ENCODE measurements at regions of chr2 and their contacts with region 1.

Region 1: DNA sequence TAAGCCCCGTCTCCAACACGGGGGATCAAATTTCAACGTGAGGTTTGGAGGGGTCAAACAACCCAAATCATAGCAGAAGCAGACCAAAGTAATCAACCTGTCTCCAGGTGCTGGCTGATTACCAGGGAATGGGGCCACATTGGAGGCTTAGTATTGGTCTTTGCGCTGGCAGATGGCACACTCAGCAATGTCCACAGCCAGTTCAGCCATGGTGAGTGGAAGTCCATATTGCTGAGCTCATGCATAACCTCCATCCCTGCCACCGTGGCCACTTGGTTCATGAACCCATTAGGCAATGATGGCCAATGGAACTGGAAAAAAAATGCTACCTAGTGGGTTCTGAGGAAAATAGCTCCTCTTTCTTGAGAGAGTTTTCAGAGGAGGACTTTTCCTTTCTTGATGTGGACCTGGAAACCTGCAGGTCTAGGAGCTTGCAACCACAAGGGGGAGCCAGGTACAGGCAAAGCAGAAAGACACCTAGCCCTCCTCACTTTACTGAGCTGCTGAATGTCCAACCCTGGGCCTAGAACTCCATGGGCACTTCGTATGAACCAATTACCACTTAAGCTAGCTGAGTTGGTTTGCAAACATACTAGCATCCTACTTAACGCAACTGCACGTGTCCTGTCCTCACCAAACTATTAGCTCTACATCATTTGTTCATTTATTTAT is 128.0 kb upstream of the GYPC start:
- DNase-seq: peak; percentile 68
- ATAC-seq: peak; percentile 91
- H3K4me3 Mint-ChIP-seq: no peak overlapping the region
- H3K27ac Mint-ChIP-seq: no peak overlapping the region
- H3K4me1 Mint-ChIP-seq: no peaks in the 10 kb centered on the region
- H3K27me3 Mint-ChIP-seq: peaks cover 7% of the 10 kb centered on the region
- CTCF ChIP-seq: peak; percentile 26; the same call in 1 of the 2 replicates

Region 2: GRCh38 chr2:126769118-126769517 is 241.1 kb after region 1 on chr2:
- CTCF ChIA-PET with region 1: interaction called, 53 read pairs
- POLR2A ChIA-PET with region 1: no interaction called
- DNase-seq: no peak
- ATAC-seq: peak; percentile 54
- H3K4me3 Mint-ChIP-seq: no peak overlapping the region
- H3K27ac Mint-ChIP-seq: no peak overlapping the region
- H3K4me1 Mint-ChIP-seq: peaks cover 3% of the 10 kb centered on the region; the same call in 1 of the 2 replicates
- H3K27me3 Mint-ChIP-seq: peaks cover 11% of the 10 kb centered on the region
- CTCF ChIP-seq: no peak

Region 3: DNA sequence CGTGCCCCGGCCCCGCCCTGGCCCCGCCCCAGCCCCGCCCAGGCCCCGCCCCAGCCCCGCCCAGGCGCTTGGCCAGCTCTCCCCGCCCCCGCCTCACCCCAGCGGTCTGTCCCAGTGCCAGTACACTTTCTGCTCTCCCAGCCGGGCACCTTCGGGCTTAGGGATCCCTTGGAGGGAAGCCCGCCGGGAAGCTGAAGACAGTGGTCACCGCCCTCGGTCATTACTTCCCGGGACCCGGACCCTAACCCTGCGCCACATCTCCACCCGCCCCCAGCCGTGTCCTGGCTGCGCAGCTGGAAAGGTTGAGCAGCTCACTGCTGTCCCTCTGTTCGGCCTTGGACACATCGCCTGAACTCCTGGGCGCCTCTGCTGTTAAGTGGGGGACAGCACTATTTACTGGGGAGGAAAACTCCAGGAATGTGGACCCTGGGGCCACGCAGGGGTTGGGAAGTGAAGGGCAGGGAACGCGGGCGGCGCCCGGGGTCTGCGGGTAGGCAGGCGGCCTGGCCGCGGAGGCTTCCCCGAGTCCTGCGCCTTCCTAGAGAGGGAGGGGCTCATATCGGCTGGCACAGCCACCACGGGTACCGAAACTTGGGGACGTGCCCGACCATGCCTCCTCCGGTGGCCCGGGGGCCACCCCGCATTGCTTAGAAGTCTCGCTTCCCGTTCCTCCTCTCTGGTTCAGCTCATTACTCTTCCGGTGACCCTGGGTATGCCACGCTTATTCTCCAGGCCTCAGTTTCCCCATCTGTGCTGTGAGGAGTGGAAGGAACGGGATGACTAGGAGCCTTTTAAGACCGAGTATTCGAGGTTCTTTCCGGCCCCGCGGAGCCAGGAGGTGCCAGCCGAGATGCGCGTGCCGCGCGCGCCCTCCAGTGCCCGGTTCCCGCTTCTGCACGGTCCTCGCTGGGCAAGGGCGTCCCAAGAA is 249.0 kb after region 1 on chr2:
- CTCF ChIA-PET with region 1: interaction called, 53 read pairs
- POLR2A ChIA-PET with region 1: no interaction called
- DNase-seq: peak; percentile 84
- ATAC-seq: peak; percentile 78
- H3K4me3 Mint-ChIP-seq: peak overlapping the region; percentile 82
- H3K27ac Mint-ChIP-seq: no peak overlapping the region
- H3K4me1 Mint-ChIP-seq: peaks cover 11% of the 10 kb centered on the region; the same call in 1 of the 2 replicates
- H3K27me3 Mint-ChIP-seq: peaks cover 17% of the 10 kb centered on the region
- CTCF ChIP-seq: peak; percentile 79